B cell (primary cell): ENCODE measurements at regions of chr14 and their contacts with region 1.

Region 1: DNA sequence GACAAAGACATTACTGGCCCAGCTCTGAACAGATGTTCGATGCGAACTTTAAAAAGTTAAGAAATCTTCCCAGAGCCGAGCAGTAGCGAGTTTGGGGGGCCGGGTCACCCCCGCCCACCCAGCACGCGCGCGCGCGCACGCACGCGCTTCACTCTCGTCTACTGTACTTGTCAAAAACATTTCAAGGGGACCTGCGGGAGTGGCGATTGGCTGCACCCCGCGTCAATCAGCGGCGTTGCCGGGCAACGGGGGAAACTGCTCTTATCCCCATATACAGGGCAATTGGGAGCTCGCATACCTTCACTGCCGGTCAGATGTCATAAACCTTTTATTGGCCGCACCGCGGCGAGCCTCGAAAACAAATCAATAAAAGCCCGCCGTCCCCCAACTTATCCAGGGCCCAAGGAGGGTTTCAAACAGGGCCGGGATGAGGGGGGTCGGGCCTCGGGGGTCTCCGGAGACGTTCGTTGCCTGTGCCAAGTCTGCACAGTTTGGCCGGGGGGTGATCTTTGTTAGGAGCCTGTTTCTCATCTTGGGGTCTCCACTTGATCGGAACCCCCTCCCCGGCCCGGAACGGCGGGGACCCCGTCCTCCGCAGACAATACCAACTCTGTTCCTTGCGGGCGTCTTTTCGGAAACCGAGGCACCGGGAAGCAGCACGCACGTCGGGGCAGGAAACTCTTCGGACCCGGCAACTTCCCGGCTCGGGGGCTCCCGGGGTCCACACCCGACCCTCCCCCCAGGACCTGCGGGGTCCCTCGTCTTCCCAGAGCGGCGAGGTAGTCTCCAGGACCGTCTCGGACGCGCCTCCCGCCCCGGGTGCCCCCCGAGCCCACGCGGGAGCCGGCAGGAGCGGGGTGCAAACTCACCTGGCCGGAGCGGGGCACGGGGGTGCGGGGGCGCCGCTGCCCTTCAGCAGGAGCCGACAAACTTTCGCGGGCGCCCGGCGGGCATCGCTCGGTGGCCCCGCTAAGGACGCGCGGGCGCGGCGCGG is 734 bp downstream of the FOXN3 start:
- DNase-seq: peak; percentile 99
- ATAC-seq: peak; percentile 68
- H3K4me3 ChIP-seq: peak overlapping the region; percentile 75 to 94 (median 83)
- H3K4me3 Mint-ChIP-seq: peak overlapping the region; percentile 92
- H3K27ac ChIP-seq: peak overlapping the region; percentile 91 to 94
- H3K27ac Mint-ChIP-seq: peak overlapping the region; percentile 95
- H3K4me1 ChIP-seq: peaks cover 15 to 18% of the 10 kb centered on the region in 2 donors
- H3K4me1 Mint-ChIP-seq: peaks cover 41% of the 10 kb centered on the region
- H3K27me3 ChIP-seq: no peaks in the 10 kb centered on the region
- H3K27me3 Mint-ChIP-seq: no peaks in the 10 kb centered on the region
- CTCF ChIP-seq: no peak

Region 2: GRCh38 chr14:88919502-88919901 is 496.8 kb before region 1 on chr14:
- CTCF ChIA-PET with region 1: no interaction called
- POLR2A ChIA-PET with region 1: no interaction called
- intact Hi-C with region 1: no loop called
- DNase-seq: no peak
- ATAC-seq: no peak
- H3K4me3 ChIP-seq: no peak overlapping the region
- H3K4me3 Mint-ChIP-seq: no peak overlapping the region
- H3K27ac ChIP-seq: no peak overlapping the region
- H3K27ac Mint-ChIP-seq: no peak overlapping the region
- H3K4me1 ChIP-seq: no peaks in the 10 kb centered on the region
- H3K4me1 Mint-ChIP-seq: no peaks in the 10 kb centered on the region
- H3K27me3 ChIP-seq: no peaks in the 10 kb centered on the region
- H3K27me3 Mint-ChIP-seq: peaks cover 30% of the 10 kb centered on the region
- CTCF ChIP-seq: no peak

Region 3: GRCh38 chr14:89040460-89041259 is 375.6 kb before region 1 on chr14:
- CTCF ChIA-PET with region 1: interaction called, 3 read pairs
- POLR2A ChIA-PET with region 1: no interaction called
- intact Hi-C with region 1: loop called (anchors 1 kb)
- DNase-seq: peak; percentile 79
- ATAC-seq: peak; percentile 68
- H3K4me3 ChIP-seq: peak overlapping the region in 4 of 5 experiments; percentile 35 to 63 (median 42)
- H3K4me3 Mint-ChIP-seq: peak overlapping the region; percentile 85
- H3K27ac ChIP-seq: no peak overlapping the region
- H3K27ac Mint-ChIP-seq: no peak overlapping the region
- H3K4me1 ChIP-seq: peaks cover 15% of the 10 kb centered on the region in 2 donors
- H3K4me1 Mint-ChIP-seq: peaks cover 15% of the 10 kb centered on the region
- H3K27me3 ChIP-seq: peaks cover 0 to 12% (median 7%) of the 10 kb centered on the region in 4 experiments
- H3K27me3 Mint-ChIP-seq: peaks cover 47% of the 10 kb centered on the region
- CTCF ChIP-seq: peak; percentile 85

Region 4: DNA sequence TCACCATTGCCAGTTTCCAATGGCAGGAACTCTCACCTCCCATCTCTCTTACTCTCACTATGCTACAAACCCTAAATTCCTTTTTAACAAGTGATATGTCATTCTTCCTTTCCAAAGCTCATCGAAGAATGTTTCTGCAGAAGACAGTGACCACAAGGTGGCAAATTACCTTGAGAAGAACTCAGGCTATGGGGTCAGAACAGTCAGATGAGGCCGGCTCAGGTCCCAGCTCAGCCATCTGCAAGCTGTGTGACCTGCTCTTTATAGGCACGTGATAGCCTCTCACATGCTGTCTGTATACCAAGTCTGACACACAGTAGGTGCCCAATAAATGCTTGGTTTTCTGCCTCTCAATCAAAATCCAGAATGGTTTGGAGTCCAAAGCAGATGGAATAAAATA is 80.0 kb before region 1 on chr14:
- CTCF ChIA-PET with region 1: interaction called, 11 read pairs
- POLR2A ChIA-PET with region 1: no interaction called
- intact Hi-C with region 1: loop called (anchors 1 kb)
- DNase-seq: peak; percentile 69
- ATAC-seq: peak; percentile 69
- H3K4me3 ChIP-seq: no peak overlapping the region
- H3K4me3 Mint-ChIP-seq: no peak overlapping the region
- H3K27ac ChIP-seq: peak overlapping the region in 1 of 2 donors; percentile 31
- H3K27ac Mint-ChIP-seq: peak overlapping the region; percentile 62
- H3K4me1 ChIP-seq: peaks cover 39 to 42% of the 10 kb centered on the region in 2 donors
- H3K4me1 Mint-ChIP-seq: peaks cover 67% of the 10 kb centered on the region
- H3K27me3 ChIP-seq: no peaks in the 10 kb centered on the region
- H3K27me3 Mint-ChIP-seq: no peaks in the 10 kb centered on the region
- CTCF ChIP-seq: peak; percentile 52

Region 5: DNA sequence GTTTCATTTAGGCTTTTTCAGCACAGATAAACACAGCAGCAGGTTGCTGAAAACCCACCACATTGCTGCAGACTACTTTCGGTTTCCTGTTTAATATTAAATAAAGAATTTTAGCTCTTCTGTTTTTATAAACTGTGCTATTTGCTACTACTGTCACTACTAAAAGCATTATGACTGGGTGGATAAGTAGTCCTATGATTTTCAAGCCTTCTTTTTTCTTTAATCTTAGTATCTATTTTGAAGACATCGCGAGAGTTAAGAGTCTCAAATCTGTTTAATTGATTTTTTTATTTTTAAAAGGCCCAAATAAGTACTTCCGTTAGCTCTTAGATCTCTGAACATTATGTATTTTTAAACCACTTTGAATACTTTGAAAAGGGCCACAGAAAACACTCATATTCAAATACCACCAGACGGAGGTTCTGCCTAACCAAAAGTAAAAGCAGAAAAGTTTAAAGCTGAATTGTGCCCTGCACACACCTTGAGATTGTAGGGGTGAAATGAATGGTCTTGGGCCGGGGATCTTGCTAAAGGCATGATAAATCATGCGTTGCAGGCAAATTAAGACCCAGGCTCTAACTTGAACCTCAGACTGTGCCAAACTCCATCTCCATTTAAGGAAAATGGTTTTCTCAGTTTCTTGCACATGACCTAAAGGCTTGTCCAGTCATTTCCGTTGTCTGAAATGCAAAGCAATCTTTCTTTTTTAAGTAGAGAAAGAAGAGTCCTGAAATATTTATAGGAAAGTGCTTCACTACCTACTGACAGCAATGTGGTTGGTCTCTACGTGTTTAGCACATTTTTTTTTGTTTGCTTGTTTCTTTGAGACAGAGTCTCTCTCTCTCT is 14.3 kb after region 1 on chr14:
- CTCF ChIA-PET with region 1: interaction called, 5 read pairs
- POLR2A ChIA-PET with region 1: interaction called, 4 read pairs
- intact Hi-C with region 1: loop called (anchors 1 kb)
- DNase-seq: peak; percentile 93
- ATAC-seq: peak; percentile 92
- H3K4me3 ChIP-seq: peak overlapping the region; percentile 49 to 88 (median 64)
- H3K4me3 Mint-ChIP-seq: peak overlapping the region; percentile 86
- H3K27ac ChIP-seq: peak overlapping the region; percentile 82 to 86
- H3K27ac Mint-ChIP-seq: peak overlapping the region; percentile 86
- H3K4me1 ChIP-seq: peaks cover 69 to 76% of the 10 kb centered on the region in 2 donors
- H3K4me1 Mint-ChIP-seq: peaks cover 71% of the 10 kb centered on the region
- H3K27me3 ChIP-seq: no peaks in the 10 kb centered on the region
- H3K27me3 Mint-ChIP-seq: no peaks in the 10 kb centered on the region
- CTCF ChIP-seq: no peak

Region 6: DNA sequence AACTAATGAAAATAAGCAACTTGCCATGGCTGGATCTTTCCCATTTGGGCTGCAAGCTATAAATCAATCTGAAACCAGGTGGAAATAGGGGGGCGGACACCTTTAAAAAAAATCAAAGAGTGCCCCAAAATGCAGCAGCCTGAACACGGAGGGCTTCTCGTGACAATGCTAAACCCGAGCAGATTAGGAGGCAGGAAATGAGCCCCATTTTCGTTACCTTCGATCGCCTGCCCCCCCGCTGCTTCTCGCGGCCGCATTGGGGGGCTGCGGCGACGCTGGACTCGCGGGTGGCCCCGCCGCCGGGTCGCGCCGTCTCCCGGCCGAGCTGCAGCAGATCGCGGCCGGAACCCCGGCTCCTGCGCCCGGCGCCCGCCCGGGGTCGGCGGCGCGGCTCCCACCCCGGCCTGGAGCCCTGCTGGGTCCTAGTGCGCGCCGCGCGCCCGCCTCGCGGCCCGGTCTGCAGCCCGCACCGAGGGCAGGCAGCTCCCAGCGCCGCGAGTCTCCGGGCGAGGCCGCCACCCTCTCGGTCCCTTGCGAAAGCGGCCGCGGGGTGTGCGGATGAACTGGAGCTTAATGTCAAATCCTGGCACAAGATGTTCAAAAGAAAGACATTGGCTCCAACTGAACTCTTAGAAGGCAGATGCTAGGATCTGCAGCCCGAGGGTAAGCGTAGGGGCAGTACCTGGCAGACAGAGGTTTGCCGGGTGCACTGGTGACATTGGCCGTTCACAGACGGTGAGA is 202.7 kb after region 1 on chr14:
- CTCF ChIA-PET with region 1: no interaction called
- POLR2A ChIA-PET with region 1: interaction called, 5 read pairs
- intact Hi-C with region 1: loop called (anchors 1 kb)
- DNase-seq: peak; percentile 81
- ATAC-seq: peak; percentile 72
- H3K4me3 ChIP-seq: peak overlapping the region; percentile 61 to 93 (median 86)
- H3K4me3 Mint-ChIP-seq: peak overlapping the region; percentile 92
- H3K27ac ChIP-seq: peak overlapping the region in 1 of 2 donors; percentile 71
- H3K27ac Mint-ChIP-seq: peak overlapping the region; percentile 86
- H3K4me1 ChIP-seq: peaks cover 51 to 55% of the 10 kb centered on the region in 2 donors
- H3K4me1 Mint-ChIP-seq: peaks cover 66% of the 10 kb centered on the region
- H3K27me3 ChIP-seq: no peaks in the 10 kb centered on the region
- H3K27me3 Mint-ChIP-seq: no peaks in the 10 kb centered on the region
- CTCF ChIP-seq: no peak

Region 7: DNA sequence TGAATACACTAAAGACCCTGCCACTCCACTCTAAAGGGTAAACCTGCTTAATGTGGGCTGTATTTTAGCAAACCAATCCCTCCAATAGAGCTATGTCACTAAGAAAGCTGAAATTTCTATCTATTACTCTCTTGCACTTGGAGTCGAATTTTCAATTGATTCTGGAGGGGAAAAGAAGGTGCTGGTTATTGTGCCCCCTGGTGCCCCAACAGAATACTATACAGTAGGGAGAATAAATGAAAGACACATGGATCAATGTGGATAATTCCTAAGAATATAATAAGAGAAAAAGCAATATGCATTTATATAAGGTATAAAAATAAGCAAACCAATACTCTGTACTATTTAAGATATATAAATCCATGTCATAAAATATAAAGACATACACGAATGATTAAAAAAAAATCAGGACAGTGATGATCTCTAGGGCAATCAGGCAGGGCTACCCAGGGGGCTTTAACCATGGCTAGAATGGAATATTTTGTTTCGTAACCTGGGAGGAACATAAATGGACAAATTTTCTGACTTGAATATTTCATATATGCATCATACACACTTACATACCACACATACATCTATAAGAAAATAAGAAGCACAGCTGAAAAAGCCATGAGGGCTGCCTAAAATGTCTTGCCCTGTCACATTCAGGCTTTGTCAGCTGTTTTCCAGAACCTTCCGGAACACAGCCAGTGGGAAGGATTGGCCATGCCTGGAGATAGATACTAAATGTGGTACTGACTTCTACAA is 483.8 kb after region 1 on chr14:
- CTCF ChIA-PET with region 1: interaction called, 4 read pairs
- POLR2A ChIA-PET with region 1: no interaction called
- intact Hi-C with region 1: loop called (anchors 5 kb)
- DNase-seq: peak; percentile 41
- ATAC-seq: no peak
- H3K4me3 ChIP-seq: no peak overlapping the region
- H3K4me3 Mint-ChIP-seq: no peak overlapping the region
- H3K27ac ChIP-seq: no peak overlapping the region
- H3K27ac Mint-ChIP-seq: no peak overlapping the region
- H3K4me1 ChIP-seq: no peaks in the 10 kb centered on the region
- H3K4me1 Mint-ChIP-seq: no peaks in the 10 kb centered on the region
- H3K27me3 ChIP-seq: no peaks in the 10 kb centered on the region
- H3K27me3 Mint-ChIP-seq: no peaks in the 10 kb centered on the region
- CTCF ChIP-seq: peak; percentile 66